ENCODE measurements at regions of chr15 and their contacts with region 1.

Region 1: GRCh38 chr15:65916664-65917406 is 47.5 kb downstream of the RAB11A start:
- DNase-seq: peak; percentile 47 to 81
- H3K4me3 ChIP-seq: no peak overlapping the region
- H3K27ac ChIP-seq: no peak overlapping the region
- H3K4me1 ChIP-seq: peaks cover 0 to 8% (median 3%) of the 10 kb centered on the region in 4 experiments; a peak in 5 of 7 replicates
- H3K27me3 ChIP-seq: no peaks in the 10 kb centered on the region
- CTCF ChIP-seq: peak; percentile 88 to 94 (median 91)
- EP300 ChIP-seq: 0 out of 3 replicates have a peak, but pooled peaks of 1 of the 2 experiments have one; percentile 22
- POLR2A ChIP-seq: no peak
- RAD21 ChIP-seq: peak; percentile 91 to 98

Region 2: GRCh38 chr15:65902378-65902777 is 14.5 kb before region 1 on chr15:
- CTCF ChIA-PET with region 1: interaction called, 46 read pairs
- POLR2A ChIA-PET with region 1: interaction called, 5 read pairs
- DNase-seq: peak; percentile 13 to 40
- H3K4me3 ChIP-seq: no peak overlapping the region
- H3K27ac ChIP-seq: no peak overlapping the region
- H3K4me1 ChIP-seq: peaks cover 0 to 5% (median 1%) of the 10 kb centered on the region in 4 experiments; a peak in 4 of 7 replicates
- H3K27me3 ChIP-seq: no peaks in the 10 kb centered on the region
- CTCF ChIP-seq: no peak
- EP300 ChIP-seq: no peak
- POLR2A ChIP-seq: no peak
- RAD21 ChIP-seq: no peak

Region 3: DNA sequence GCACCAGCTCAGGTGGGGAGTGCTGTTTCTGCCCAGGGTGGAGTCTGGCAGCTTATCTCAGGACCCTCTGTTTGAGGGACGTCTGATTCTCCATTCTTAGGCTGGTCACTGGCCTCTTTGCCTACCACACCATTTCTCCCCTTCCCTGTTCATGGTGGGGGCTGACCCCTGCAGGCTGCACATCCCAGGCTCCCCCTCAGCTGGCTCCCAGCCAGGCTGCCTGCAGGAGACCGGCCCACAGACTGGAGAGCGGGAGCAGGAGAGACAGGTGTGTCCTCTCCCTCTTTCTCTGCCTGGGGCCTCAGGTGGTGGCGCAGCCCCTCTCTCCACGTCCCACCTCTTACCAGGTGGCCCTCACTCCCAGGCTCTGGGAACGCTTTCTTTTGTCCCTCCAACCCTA is 13.3 kb after region 1 on chr15:
- CTCF ChIA-PET with region 1: interaction called, 45 read pairs
- POLR2A ChIA-PET with region 1: interaction called, 8 read pairs
- DNase-seq: no peak
- H3K4me3 ChIP-seq: no peak overlapping the region
- H3K27ac ChIP-seq: no peak overlapping the region
- H3K4me1 ChIP-seq: peaks cover 0 to 2% (median 0%) of the 10 kb centered on the region in 4 experiments; a peak in 3 of 7 replicates
- H3K27me3 ChIP-seq: no peaks in the 10 kb centered on the region
- CTCF ChIP-seq: no peak
- EP300 ChIP-seq: no peak
- POLR2A ChIP-seq: no peak
- RAD21 ChIP-seq: no peak